Ascending aorta (tissue), 2 donors: ENCODE measurements at regions of chr12 and their contacts with region 1.

Region 1: GRCh38 chr12:21683115-21683514 is 25.5 kb upstream of the LDHB start:
- DNase-seq: no peak
- H3K4me3 ChIP-seq: no peak overlapping the region
- H3K27ac ChIP-seq: no peak overlapping the region
- H3K4me1 ChIP-seq: no peaks in the 10 kb centered on the region
- H3K27me3 ChIP-seq: no peaks in the 10 kb centered on the region
- CTCF ChIP-seq: no peak

Region 2: DNA sequence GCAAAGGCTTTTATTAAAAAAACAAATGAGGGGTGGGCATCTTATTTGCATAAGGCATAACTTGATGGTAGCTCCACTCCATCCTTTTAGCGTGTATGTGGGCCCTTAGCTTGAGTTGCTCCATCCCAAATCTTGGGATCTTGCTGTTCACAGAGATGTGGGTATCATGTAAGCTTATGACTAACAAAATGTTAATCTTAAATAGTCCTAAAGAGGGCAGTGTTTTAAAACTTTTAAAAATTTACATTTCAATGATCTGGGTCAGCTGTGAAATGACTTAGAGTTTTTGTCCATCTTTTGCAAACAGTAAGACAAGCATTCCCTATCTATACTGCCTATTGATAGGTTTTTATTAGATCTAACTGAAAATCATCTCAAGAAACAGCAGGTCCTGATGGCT is 434.4 kb before region 1 on chr12:
- intact Hi-C with region 1: loop called (anchors 5 kb)
- DNase-seq: no peak
- H3K4me3 ChIP-seq: no peak overlapping the region
- H3K27ac ChIP-seq: no peak overlapping the region
- H3K4me1 ChIP-seq: no peaks in the 10 kb centered on the region
- H3K27me3 ChIP-seq: no peaks in the 10 kb centered on the region
- CTCF ChIP-seq: peak in 1 of 3 experiments; percentile 21